Ovary (tissue), 10 donors: ENCODE measurements at regions of chr14 and their contacts with region 1.

Region 1: GRCh38 chr14:29724991-29725390 is 202.7 kb downstream of the PRKD1 start:
- DNase-seq: peak in 3 of 5 donors; percentile 18 to 30 (median 30)
- H3K4me3 ChIP-seq: no peak overlapping the region
- H3K27ac ChIP-seq: peak overlapping the region in 1 of 2 donors; percentile 8
- H3K4me1 ChIP-seq: no peaks in the 10 kb centered on the region
- H3K27me3 ChIP-seq: no peaks in the 10 kb centered on the region
- CTCF ChIP-seq: no peak
- EP300 ChIP-seq: no peak
- POLR2A ChIP-seq: no peak

Region 2: DNA sequence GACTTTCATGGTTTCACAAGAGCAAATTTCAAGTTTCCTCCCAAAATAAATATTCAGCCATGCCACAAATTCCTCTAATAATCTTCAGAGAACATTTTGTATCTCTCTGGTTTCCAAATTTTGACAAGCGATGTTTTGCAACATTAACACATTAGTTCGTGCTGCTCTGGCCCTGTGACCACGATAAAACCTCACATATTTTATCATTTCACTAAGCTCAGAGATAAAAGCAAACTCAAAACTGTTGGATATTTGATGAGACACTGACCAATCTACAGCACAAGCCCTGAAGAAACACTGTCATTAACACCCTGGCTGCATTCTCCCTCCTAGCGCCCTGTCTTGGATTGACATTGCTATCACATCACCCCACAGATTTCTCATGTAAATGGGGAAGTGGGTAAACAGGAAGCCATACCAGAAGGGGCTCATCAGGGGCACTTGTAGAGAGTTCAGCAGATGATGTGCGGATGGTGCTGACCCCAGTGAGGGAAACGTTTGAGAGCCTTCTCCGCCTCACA is 61.6 kb before region 1 on chr14:
- intact Hi-C with region 1: loop called in 1 of 4 experiments (anchors 10 kb)
- DNase-seq: peak in 1 of 5 donors; percentile 13
- H3K4me3 ChIP-seq: no peak overlapping the region
- H3K27ac ChIP-seq: no peak overlapping the region
- H3K4me1 ChIP-seq: no peaks in the 10 kb centered on the region
- H3K27me3 ChIP-seq: no peaks in the 10 kb centered on the region
- CTCF ChIP-seq: no peak
- EP300 ChIP-seq: no peak
- POLR2A ChIP-seq: no peak